HEK293 (cell line): ENCODE measurements at regions of chr7 and their contacts with region 1.

Region 1: GRCh38 chr7:66190504-66190857 is 14.7 kb upstream of the TPST1 start:
- H3K4me3 ChIP-seq: no peak overlapping the region
- H3K27ac ChIP-seq: no peak overlapping the region
- H3K4me1 ChIP-seq: no peaks in the 10 kb centered on the region
- CTCF ChIP-seq: no peak

Region 2: GRCh38 chr7:65287023-65287422 is 903.5 kb before region 1 on chr7:
- CTCF ChIA-PET with region 1: no interaction called
- POLR2A ChIA-PET with region 1: no interaction called
- H3K4me3 ChIP-seq: no peak overlapping the region
- H3K27ac ChIP-seq: no peak overlapping the region
- H3K4me1 ChIP-seq: no peaks in the 10 kb centered on the region
- CTCF ChIP-seq: no peak

Region 3: GRCh38 chr7:66929935-66930334 is 739.5 kb after region 1 on chr7:
- CTCF ChIA-PET with region 1: no interaction called
- POLR2A ChIA-PET with region 1: interaction called, 10 read pairs
- H3K4me3 ChIP-seq: no peak overlapping the region
- H3K27ac ChIP-seq: no peak overlapping the region
- H3K4me1 ChIP-seq: peaks cover 3% of the 10 kb centered on the region
- CTCF ChIP-seq: no peak